K562 (cell line): ENCODE measurements at regions of chr4 and their contacts with region 1.

Region 1: GRCh38 chr4:78166637-78167036 is 109.5 kb downstream of the FRAS1 start:
- DNase-seq: no peak
- ATAC-seq: no peak
- H3K4me3 ChIP-seq: no peak overlapping the region
- H3K27ac ChIP-seq: no peak overlapping the region
- H3K4me1 ChIP-seq: no peaks in the 10 kb centered on the region
- H3K27me3 ChIP-seq: peaks cover 3 to 7% of the 10 kb centered on the region in 2 experiments; a peak in 2 of 5 replicates
- CTCF ChIP-seq: no peak
- EP300 ChIP-seq: no peak
- POLR2A ChIP-seq: no peak
- RAD21 ChIP-seq: no peak

Region 2: DNA sequence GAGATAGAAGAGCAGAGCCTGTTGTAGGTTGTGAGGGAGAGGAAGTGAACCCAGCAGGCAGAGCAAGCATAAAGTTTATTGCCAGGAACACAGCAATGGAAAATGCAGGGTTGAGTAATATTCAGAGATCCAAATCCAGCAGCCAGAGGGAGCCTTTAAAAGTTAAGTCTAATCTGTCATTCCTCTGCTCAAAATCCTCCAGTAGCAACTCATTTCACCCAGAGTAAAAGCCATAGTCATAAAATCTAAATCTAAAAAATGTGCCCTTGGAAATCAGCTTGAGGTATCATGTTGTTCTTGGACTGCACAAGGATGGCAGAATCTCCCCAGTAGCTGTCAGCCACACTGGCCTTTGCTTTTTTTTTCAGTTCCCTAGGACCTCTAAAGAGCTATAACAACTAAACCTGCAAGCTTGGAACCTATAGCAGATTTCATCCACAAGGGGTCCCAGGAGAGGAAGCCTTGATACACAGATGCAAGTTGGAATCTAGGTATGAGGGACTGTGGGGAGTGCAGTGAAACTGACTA is 172.4 kb before region 1 on chr4:
- CTCF ChIA-PET with region 1: no interaction called
- POLR2A ChIA-PET with region 1: no interaction called
- in situ Hi-C with region 1: no loop called
- intact Hi-C with region 1: loop called (anchors 10 kb)
- DNase-seq: peak; percentile 7 to 54 (median 20)
- ATAC-seq: peak; percentile 92
- H3K4me3 ChIP-seq: no peak overlapping the region
- H3K27ac ChIP-seq: no peak overlapping the region
- H3K4me1 ChIP-seq: no peaks in the 10 kb centered on the region
- H3K27me3 ChIP-seq: peaks cover 0 to 10% of the 10 kb centered on the region in 2 experiments; a peak in 3 of 5 replicates
- CTCF ChIP-seq: peak; percentile 45 to 53 (median 52); a peak in 5 of 6 replicates
- EP300 ChIP-seq: no peak
- POLR2A ChIP-seq: no peak
- RAD21 ChIP-seq: peak; percentile 33 to 49

Region 3: GRCh38 chr4:78056265-78057129 is 110.1 kb before region 1 on chr4:
- CTCF ChIA-PET with region 1: no interaction called
- POLR2A ChIA-PET with region 1: no interaction called
- in situ Hi-C with region 1: no loop called
- intact Hi-C with region 1: loop called (anchors 5 kb)
- DNase-seq: peak; percentile 10 to 28 (median 16)
- ATAC-seq: peak; percentile 39
- H3K4me3 ChIP-seq: no peak overlapping the region
- H3K27ac ChIP-seq: no peak overlapping the region
- H3K4me1 ChIP-seq: peaks cover 0 to 18% of the 10 kb centered on the region in 2 experiments; a peak in 4 of 5 replicates
- H3K27me3 ChIP-seq: peaks cover 35 to 41% of the 10 kb centered on the region in 2 experiments
- CTCF ChIP-seq: no peak
- EP300 ChIP-seq: no peak
- POLR2A ChIP-seq: no peak
- RAD21 ChIP-seq: no peak

Region 4: GRCh38 chr4:78644744-78645330 is 478.2 kb after region 1 on chr4:
- CTCF ChIA-PET with region 1: no interaction called
- POLR2A ChIA-PET with region 1: no interaction called
- in situ Hi-C with region 1: no loop called
- intact Hi-C with region 1: no loop called
- DNase-seq: peak; percentile 69 to 87 (median 71)
- ATAC-seq: peak; percentile 91
- H3K4me3 ChIP-seq: no peak overlapping the region
- H3K27ac ChIP-seq: peak overlapping the region; percentile 79; the same call in 1 of the 3 replicates
- H3K4me1 ChIP-seq: peaks cover 31 to 52% of the 10 kb centered on the region in 2 experiments
- H3K27me3 ChIP-seq: no peaks in the 10 kb centered on the region
- CTCF ChIP-seq: peak; percentile 79 to 90 (median 88)
- EP300 ChIP-seq: no peak
- POLR2A ChIP-seq: no peak
- RAD21 ChIP-seq: peak; percentile 75 to 80